Psoas muscle (tissue), 8 donors: ENCODE measurements at regions of chr17 and their contacts with region 1.

Region 1: GRCh38 chr17:36475346-36475970 is 11.0 kb upstream of the ZNHIT3 start:
- DNase-seq: no peak
- ATAC-seq: no peak
- H3K4me3 ChIP-seq: no peak overlapping the region
- H3K27ac ChIP-seq: no peak overlapping the region
- H3K4me1 ChIP-seq: no peaks in the 10 kb centered on the region
- H3K27me3 ChIP-seq: peaks cover 0 to 17% (median 0%) of the 10 kb centered on the region in 3 donors
- CTCF ChIP-seq: no peak

Region 2: GRCh38 chr17:36133602-36134236 is 341.7 kb before region 1 on chr17:
- intact Hi-C with region 1: loop called in 1 of 2 experiments (anchors 10 kb)
- DNase-seq: no peak
- ATAC-seq: no peak
- H3K4me3 ChIP-seq: no peak overlapping the region
- H3K27ac ChIP-seq: no peak overlapping the region
- H3K4me1 ChIP-seq: no peaks in the 10 kb centered on the region
- H3K27me3 ChIP-seq: peaks cover 0 to 4% (median 3%) of the 10 kb centered on the region in 3 donors
- CTCF ChIP-seq: no peak

Region 3: DNA sequence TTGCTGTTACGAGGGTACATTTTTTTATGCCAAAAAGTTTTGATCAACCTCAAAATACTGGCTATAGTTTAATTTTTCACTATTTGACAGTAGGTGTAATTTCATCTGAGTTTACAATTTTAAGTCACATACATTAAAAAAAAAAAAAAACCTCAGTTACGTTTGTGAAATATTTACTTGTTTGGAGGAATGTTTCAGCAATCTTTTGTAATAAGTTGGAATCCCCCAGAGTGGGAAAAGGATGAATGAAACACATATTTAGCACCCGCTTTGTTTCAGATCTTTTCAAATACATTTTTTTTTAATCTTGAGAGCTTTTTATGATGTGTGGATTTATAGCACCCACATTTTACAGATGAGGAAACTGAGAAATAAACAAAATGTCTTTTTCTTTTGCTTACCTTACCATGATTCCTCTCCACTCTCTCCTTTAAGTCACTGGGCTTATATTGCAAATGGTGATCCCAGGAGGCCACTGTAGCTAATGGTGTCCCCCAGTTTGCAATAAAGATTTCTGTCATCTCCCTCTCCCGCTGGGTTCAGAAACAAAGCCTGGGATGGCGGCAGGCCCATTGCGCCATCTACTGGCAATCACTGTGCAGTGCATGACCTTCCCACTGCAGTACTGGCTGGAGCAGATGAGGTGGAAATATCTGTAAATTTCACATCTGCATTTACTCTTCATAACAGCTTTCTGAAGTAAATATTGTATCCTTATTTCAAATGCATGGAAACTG is 326.7 kb before region 1 on chr17:
- intact Hi-C with region 1: loop called in 1 of 2 experiments (anchors 5 kb)
- DNase-seq: peak; percentile 67 to 77
- ATAC-seq: peak; percentile 55 to 87 (median 64)
- H3K4me3 ChIP-seq: no peak overlapping the region
- H3K27ac ChIP-seq: no peak overlapping the region
- H3K4me1 ChIP-seq: no peaks in the 10 kb centered on the region
- H3K27me3 ChIP-seq: peaks cover 2 to 6% (median 3%) of the 10 kb centered on the region in 3 donors
- CTCF ChIP-seq: peak; percentile 92

Region 4: GRCh38 chr17:36510636-36511035 is 35.2 kb after region 1 on chr17:
- intact Hi-C with region 1: no loop called
- DNase-seq: no peak
- ATAC-seq: no peak
- H3K4me3 ChIP-seq: no peak overlapping the region
- H3K27ac ChIP-seq: no peak overlapping the region
- H3K4me1 ChIP-seq: no peaks in the 10 kb centered on the region
- H3K27me3 ChIP-seq: no peaks in the 10 kb centered on the region
- CTCF ChIP-seq: no peak

Region 5: DNA sequence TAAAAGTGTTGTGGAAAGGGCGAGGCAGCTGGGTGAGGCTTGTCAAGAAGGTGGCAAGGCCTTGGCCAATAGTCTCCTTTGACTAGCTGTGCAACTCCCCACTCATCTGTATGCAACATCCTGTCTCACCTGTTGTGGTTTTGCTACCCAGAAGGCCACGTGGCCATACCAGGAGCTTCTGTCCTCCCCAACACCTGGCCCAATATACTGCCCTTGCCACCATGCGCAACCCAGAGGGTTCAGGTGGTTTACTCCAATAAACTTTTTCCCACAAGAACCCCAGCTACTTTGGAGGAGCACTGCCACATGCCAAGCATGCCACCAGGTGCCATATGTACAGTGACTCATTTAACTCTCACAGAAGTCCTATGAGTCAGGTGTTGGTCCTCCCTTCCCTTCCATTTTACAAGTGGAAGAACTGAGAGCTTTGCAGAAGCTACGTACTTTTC is 49.0 kb after region 1 on chr17:
- intact Hi-C with region 1: no loop called
- DNase-seq: no peak
- ATAC-seq: no peak
- H3K4me3 ChIP-seq: no peak overlapping the region
- H3K27ac ChIP-seq: no peak overlapping the region
- H3K4me1 ChIP-seq: no peaks in the 10 kb centered on the region
- H3K27me3 ChIP-seq: no peaks in the 10 kb centered on the region
- CTCF ChIP-seq: no peak

Region 6: GRCh38 chr17:36728030-36728991 is 252.9 kb after region 1 on chr17:
- intact Hi-C with region 1: no loop called
- DNase-seq: no peak
- ATAC-seq: no peak
- H3K4me3 ChIP-seq: no peak overlapping the region
- H3K27ac ChIP-seq: no peak overlapping the region
- H3K4me1 ChIP-seq: no peaks in the 10 kb centered on the region
- H3K27me3 ChIP-seq: peaks cover 0 to 63% (median 9%) of the 10 kb centered on the region in 3 donors
- CTCF ChIP-seq: no peak